HepG2 (cell line): ENCODE measurements at regions of chr9 and their contacts with region 1.

Region 1: GRCh38 chr9:32526041-32526706 is at the start of gene RIGI:
- DNase-seq: peak; percentile 89
- ATAC-seq: peak; percentile 90
- H3K4me3 ChIP-seq: peak within 1 kb of the TSS; percentile 80 to 86 (median 82)
- H3K27ac ChIP-seq: peak within 1 kb of the TSS; percentile 75
- H3K4me1 ChIP-seq: peaks cover 39% of the 10 kb centered on the region
- H3K27me3 ChIP-seq: no peaks in the 10 kb centered on the region; a peak in 1 of 5 replicates
- CTCF ChIP-seq: peak; percentile 75
- EP300 ChIP-seq: 0 out of 4 replicates have a peak, but pooled peaks of 1 of the 2 experiments have one; percentile 3
- POLR2A ChIP-seq: peak; percentile 65 to 79
- RAD21 ChIP-seq: peak; percentile 47; the same call in 1 of the 2 replicates
- total RNA-seq, gene RIGI: 8.2 and 12.2 TPM in 2 replicates

Region 2: GRCh38 chr9:32384364-32385151 is 141.6 kb before region 1 on chr9 and contains the start of gene ACO1:
- CTCF ChIA-PET with region 1: interaction called, 33 read pairs
- POLR2A ChIA-PET with region 1: interaction called, 34 read pairs
- in situ Hi-C with region 1: loop called (anchors 5 kb)
- intact Hi-C with region 1: loop called (anchors 1 kb)
- DNase-seq: peak; percentile 80
- ATAC-seq: peak; percentile 94
- H3K4me3 ChIP-seq: peak within 1 kb of the TSS; percentile 79 to 98 (median 95)
- H3K27ac ChIP-seq: peak within 1 kb of the TSS; percentile 81
- H3K4me1 ChIP-seq: peaks cover 39% of the 10 kb centered on the region
- H3K27me3 ChIP-seq: no peaks in the 10 kb centered on the region; a peak in 1 of 5 replicates
- CTCF ChIP-seq: peak; percentile 55
- EP300 ChIP-seq: peak in 1 of 2 experiments; percentile 45; a peak in 1 of 4 replicates
- POLR2A ChIP-seq: peak; percentile 57 to 87; a peak in 3 of 4 replicates
- RAD21 ChIP-seq: peak; percentile 26; the same call in 1 of the 2 replicates
- total RNA-seq, gene ACO1: 48.2 and 68.9 TPM in 2 replicates

Region 3: GRCh38 chr9:32456564-32456963 is 69.6 kb before region 1 on chr9:
- CTCF ChIA-PET with region 1: no interaction called
- POLR2A ChIA-PET with region 1: interaction called, 9 read pairs
- in situ Hi-C with region 1: no loop called
- intact Hi-C with region 1: loop called (anchors 1 kb)
- DNase-seq: peak; percentile 82
- ATAC-seq: peak; percentile 96
- H3K4me3 ChIP-seq: no peak overlapping the region
- H3K27ac ChIP-seq: peak overlapping the region; percentile 66
- H3K4me1 ChIP-seq: peaks cover 28% of the 10 kb centered on the region
- H3K27me3 ChIP-seq: no peaks in the 10 kb centered on the region
- CTCF ChIP-seq: no peak
- EP300 ChIP-seq: peak; percentile 24 to 81; a peak in 2 of 4 replicates
- POLR2A ChIP-seq: no peak
- RAD21 ChIP-seq: no peak

Region 4: GRCh38 chr9:32550562-32551433 is 24.6 kb after region 1 on chr9:
- CTCF ChIA-PET with region 1: no interaction called
- POLR2A ChIA-PET with region 1: interaction called, 43 read pairs
- in situ Hi-C with region 1: no loop called
- intact Hi-C with region 1: no loop called
- DNase-seq: peak; percentile 93
- ATAC-seq: peak; percentile 89
- H3K4me3 ChIP-seq: peak overlapping the region; percentile 89 to 91 (median 90)
- H3K27ac ChIP-seq: peak overlapping the region; percentile 96
- H3K4me1 ChIP-seq: peaks cover 34% of the 10 kb centered on the region
- H3K27me3 ChIP-seq: no peaks in the 10 kb centered on the region; a peak in 1 of 5 replicates
- CTCF ChIP-seq: peak; percentile 39
- EP300 ChIP-seq: no peak; a peak in 1 of 4 replicates
- POLR2A ChIP-seq: peak; percentile 56 to 63
- RAD21 ChIP-seq: peak; percentile 67

Region 5: GRCh38 chr9:33024966-33025571 is 498.9 kb after region 1 on chr9 and contains the start of gene DNAJA1:
- CTCF ChIA-PET with region 1: no interaction called
- POLR2A ChIA-PET with region 1: interaction called, 13 read pairs
- in situ Hi-C with region 1: no loop called
- intact Hi-C with region 1: no loop called
- DNase-seq: peak; percentile 82
- ATAC-seq: peak; percentile 90
- H3K4me3 ChIP-seq: peak within 1 kb of the TSS; percentile 98 to 100 (median 100)
- H3K27ac ChIP-seq: peak within 1 kb of the TSS; percentile 96
- H3K4me1 ChIP-seq: peaks cover 63% of the 10 kb centered on the region
- H3K27me3 ChIP-seq: no peaks in the 10 kb centered on the region; a peak in 2 of 5 replicates
- CTCF ChIP-seq: no peak
- EP300 ChIP-seq: no peak; a peak in 1 of 4 replicates
- POLR2A ChIP-seq: peak; percentile 99
- RAD21 ChIP-seq: peak; percentile 52; the same call in 1 of the 2 replicates
- total RNA-seq, gene DNAJA1: 306 and 476 TPM in 2 replicates